ENCODE measurements at regions of chr6 and their contacts with region 1.

Region 1: DNA sequence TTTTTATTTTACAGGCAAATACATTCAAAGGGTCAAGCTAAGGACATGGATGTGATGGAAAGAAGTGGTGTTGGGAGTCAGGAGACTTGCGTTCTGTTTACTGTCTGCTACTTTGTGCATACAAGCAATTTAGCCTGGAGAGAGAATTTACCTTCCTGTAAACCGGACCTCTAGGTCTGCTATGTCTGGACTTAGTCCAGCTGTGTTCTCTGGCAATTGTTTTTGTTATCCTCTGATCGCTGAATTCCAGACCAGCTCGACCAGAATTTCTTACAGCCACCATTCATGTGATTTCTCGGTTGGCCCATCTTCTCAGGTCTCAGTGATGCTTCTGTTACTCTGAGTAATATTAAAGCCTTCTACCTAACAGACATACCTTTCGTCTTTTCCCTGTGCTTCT is 75.1 kb downstream of the LRRC1 start:
- DNase-seq: no peak
- H3K4me3 ChIP-seq: no peak overlapping the region
- H3K27ac ChIP-seq: no peak overlapping the region
- H3K4me1 ChIP-seq: peaks cover 0 to 27% (median 3%) of the 10 kb centered on the region in 4 donors
- H3K27me3 ChIP-seq: no peaks in the 10 kb centered on the region
- CTCF ChIP-seq: no peak

Region 2: GRCh38 chr6:53943395-53943794 is 73.4 kb after region 1 on chr6:
- intact Hi-C with region 1: loop called (anchors 10 kb)
- DNase-seq: peak in 1 of 2 donors; percentile 66
- H3K4me3 ChIP-seq: no peak overlapping the region
- H3K27ac ChIP-seq: peak overlapping the region in 1 of 2 donors; percentile 25
- H3K4me1 ChIP-seq: peaks cover 0 to 18% (median 10%) of the 10 kb centered on the region in 4 donors
- H3K27me3 ChIP-seq: no peaks in the 10 kb centered on the region
- CTCF ChIP-seq: no peak

Region 3: GRCh38 chr6:54071821-54072340 is 201.9 kb after region 1 on chr6:
- intact Hi-C with region 1: no loop called
- DNase-seq: no peak
- H3K4me3 ChIP-seq: no peak overlapping the region
- H3K27ac ChIP-seq: no peak overlapping the region
- H3K4me1 ChIP-seq: peaks cover 0 to 5% (median 2%) of the 10 kb centered on the region in 4 donors
- H3K27me3 ChIP-seq: no peaks in the 10 kb centered on the region
- CTCF ChIP-seq: no peak

Region 4: DNA sequence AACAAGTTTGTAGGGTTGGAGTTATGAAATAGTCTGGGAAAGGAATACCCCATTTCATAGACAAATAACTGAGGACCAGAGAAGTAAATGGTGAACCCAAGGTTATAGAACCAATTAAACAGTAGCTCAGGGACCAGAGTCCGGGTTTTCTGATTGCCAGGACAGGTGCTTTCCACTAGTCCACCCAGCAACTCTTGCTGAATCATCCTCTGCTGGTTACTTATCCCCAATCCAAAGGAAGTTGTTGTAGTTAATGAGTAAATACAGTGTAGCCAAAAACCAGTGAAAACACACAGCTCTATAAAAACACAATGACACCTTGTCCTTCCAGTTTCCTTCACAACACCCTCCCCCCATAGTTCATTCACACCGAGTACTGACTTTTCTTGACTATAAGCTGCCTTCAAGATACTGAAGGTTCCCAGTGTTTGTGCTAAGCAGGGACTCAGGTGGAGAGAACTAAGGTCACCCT is 437.5 kb after region 1 on chr6:
- intact Hi-C with region 1: no loop called
- DNase-seq: no peak
- H3K4me3 ChIP-seq: no peak overlapping the region
- H3K27ac ChIP-seq: no peak overlapping the region
- H3K4me1 ChIP-seq: no peaks in the 10 kb centered on the region
- H3K27me3 ChIP-seq: no peaks in the 10 kb centered on the region
- CTCF ChIP-seq: no peak